Activated T-helper 2 cell treated with anti-CD3 and anti-CD28 coated beads, Interferon-gamma antibody, Interleukin-2, Interleukin-4, amounts not matched to agents 10 μg/mL and 5 μg/mL and 100 μg/mL, durations not matched to agents 14 hours and 24 hours and 36 hours (primary cell): ENCODE measurements at regions of chr9 and their contacts with region 1.

Region 1: GRCh38 chr9:69496846-69497450 is 171.9 kb downstream of the ENTREP1 start:
- DNase-seq: no peak
- H3K4me3 Mint-ChIP-seq: no peak overlapping the region
- H3K27ac Mint-ChIP-seq: no peak overlapping the region
- H3K4me1 Mint-ChIP-seq: peaks cover 7% of the 10 kb centered on the region
- H3K27me3 Mint-ChIP-seq: no peaks in the 10 kb centered on the region

Region 2: DNA sequence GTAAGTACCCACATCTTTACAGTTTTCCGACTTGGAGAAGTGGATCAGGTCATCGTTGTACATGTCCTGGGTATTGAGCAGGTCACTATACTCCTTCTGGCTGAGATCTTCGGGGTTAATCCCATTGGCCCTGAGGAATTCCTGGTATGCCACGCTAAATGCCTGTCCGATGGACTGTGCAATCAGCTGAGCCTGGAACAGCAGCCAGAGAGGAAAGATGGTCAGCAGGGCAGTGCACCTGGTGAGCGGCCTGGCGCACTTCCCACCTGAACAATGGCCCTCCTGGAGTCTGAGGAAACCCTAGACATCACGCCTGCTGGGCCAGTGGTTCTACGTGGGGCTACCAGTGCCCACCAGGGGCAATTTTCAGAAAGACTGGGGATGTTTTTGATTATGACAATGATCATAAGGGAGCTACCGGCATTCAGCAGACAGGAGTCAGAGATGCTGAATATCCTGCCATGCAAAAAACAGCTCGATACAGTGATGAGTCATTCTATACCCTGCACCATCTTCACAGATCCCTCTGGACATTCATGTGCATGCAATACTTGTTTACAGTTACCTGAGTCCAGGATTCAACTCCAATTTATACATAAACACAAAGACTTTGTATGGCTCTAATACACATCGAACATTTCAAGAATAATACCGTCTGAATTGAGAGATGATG is 44.7 kb before region 1 on chr9:
- intact Hi-C with region 1: no loop called
- DNase-seq: no peak
- H3K4me3 Mint-ChIP-seq: no peak overlapping the region
- H3K27ac Mint-ChIP-seq: no peak overlapping the region
- H3K4me1 Mint-ChIP-seq: no peaks in the 10 kb centered on the region
- H3K27me3 Mint-ChIP-seq: peaks cover 5% of the 10 kb centered on the region

Region 3: DNA sequence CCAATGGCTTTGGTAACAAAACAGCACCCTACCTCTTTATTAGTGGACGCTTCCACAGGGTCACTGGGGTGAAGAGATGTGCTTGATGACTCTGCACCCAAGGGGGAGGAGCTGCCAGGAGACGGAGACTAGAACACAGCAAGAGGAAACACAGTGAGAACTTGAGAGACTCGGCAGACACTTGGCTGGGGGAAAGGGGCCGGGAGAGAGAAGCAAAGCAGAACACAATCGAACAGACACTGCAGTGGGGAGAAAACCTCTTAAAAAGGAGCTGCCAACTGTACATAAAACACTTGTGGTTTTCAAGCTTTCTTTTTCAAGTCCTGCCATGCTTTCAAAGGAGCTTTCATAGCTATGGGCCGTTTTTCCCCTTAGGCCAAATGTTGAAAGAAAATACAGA is 20.9 kb before region 1 on chr9:
- intact Hi-C with region 1: no loop called
- DNase-seq: no peak
- H3K4me3 Mint-ChIP-seq: no peak overlapping the region
- H3K27ac Mint-ChIP-seq: no peak overlapping the region
- H3K4me1 Mint-ChIP-seq: peaks cover 21% of the 10 kb centered on the region
- H3K27me3 Mint-ChIP-seq: peaks cover 5% of the 10 kb centered on the region

Region 4: DNA sequence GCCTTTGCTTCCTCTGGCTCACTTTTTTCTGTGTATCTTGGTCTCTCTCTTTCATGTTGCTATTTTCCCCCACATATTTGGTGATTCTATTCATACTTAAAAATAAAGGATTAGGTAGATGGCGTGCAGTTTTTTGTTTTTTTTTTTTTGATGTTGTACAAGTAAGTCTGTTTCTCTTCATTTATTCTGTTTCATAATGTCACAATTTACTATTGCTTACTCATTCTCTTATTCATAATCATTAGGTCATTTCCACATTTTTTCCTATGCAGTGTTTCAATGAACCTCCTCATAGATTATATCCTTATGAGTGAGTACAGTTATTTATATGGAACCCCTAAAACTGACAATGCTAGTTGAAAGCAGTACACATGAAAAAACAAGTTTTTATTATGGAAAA is 39.0 kb after region 1 on chr9:
- intact Hi-C with region 1: loop called (anchors 5 kb)
- DNase-seq: no peak
- H3K4me3 Mint-ChIP-seq: no peak overlapping the region
- H3K27ac Mint-ChIP-seq: no peak overlapping the region
- H3K4me1 Mint-ChIP-seq: no peaks in the 10 kb centered on the region
- H3K27me3 Mint-ChIP-seq: peaks cover 19% of the 10 kb centered on the region

Region 5: GRCh38 chr9:69949396-69949795 is 452.4 kb after region 1 on chr9:
- intact Hi-C with region 1: no loop called
- DNase-seq: no peak
- H3K4me3 Mint-ChIP-seq: no peak overlapping the region
- H3K27ac Mint-ChIP-seq: no peak overlapping the region
- H3K4me1 Mint-ChIP-seq: no peaks in the 10 kb centered on the region
- H3K27me3 Mint-ChIP-seq: peaks cover 12% of the 10 kb centered on the region